Caco-2 (cell line): ENCODE measurements at regions of chr3 and their contacts with region 1.

Region 1: GRCh38 chr3:34012102-34012461 is 213.7 kb downstream of the PDCD6IP start:
- DNase-seq: peak; percentile 78 to 82
- H3K4me3 ChIP-seq: no peak overlapping the region
- H3K4me3 Mint-ChIP-seq: no peak overlapping the region
- H3K27ac Mint-ChIP-seq: peak overlapping the region; percentile 67
- H3K4me1 ChIP-seq: peaks cover 49% of the 10 kb centered on the region
- H3K4me1 Mint-ChIP-seq: peaks cover 35% of the 10 kb centered on the region
- H3K27me3 ChIP-seq: no peaks in the 10 kb centered on the region
- H3K27me3 Mint-ChIP-seq: no peaks in the 10 kb centered on the region
- CTCF ChIP-seq: no peak

Region 2: DNA sequence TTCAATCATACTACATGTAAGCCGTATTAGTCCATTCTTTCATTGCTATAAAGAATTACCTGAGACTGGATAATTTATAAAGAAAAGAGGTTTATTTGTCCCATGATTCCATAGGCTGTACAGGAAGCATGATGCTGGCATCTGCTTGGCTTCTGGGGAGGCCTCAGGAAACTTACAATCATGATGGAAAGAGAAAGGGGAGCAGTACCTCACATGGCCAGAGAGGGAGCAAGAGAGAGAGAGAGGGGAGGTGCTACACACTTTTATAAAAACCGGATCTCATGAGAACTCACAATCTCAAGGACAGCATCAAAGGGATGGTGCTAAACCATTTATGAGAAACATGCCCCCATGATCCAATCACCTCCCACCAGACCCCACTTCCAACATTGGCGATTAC is 279.7 kb before region 1 on chr3:
- CTCF ChIA-PET with region 1: no interaction called
- POLR2A ChIA-PET with region 1: no interaction called
- intact Hi-C with region 1: no loop called
- DNase-seq: peak in 1 of 2 experiments; percentile 16
- H3K4me3 ChIP-seq: no peak overlapping the region
- H3K4me3 Mint-ChIP-seq: no peak overlapping the region
- H3K27ac Mint-ChIP-seq: no peak overlapping the region
- H3K4me1 ChIP-seq: no peaks in the 10 kb centered on the region
- H3K4me1 Mint-ChIP-seq: no peaks in the 10 kb centered on the region
- H3K27me3 ChIP-seq: no peaks in the 10 kb centered on the region
- H3K27me3 Mint-ChIP-seq: no peaks in the 10 kb centered on the region
- CTCF ChIP-seq: peak in 1 of 2 experiments; percentile 22

Region 3: GRCh38 chr3:33954956-33955355 is 57.1 kb before region 1 on chr3:
- CTCF ChIA-PET with region 1: no interaction called
- POLR2A ChIA-PET with region 1: no interaction called
- intact Hi-C with region 1: loop called (anchors 1 kb)
- DNase-seq: peak; percentile 38 to 39
- H3K4me3 ChIP-seq: no peak overlapping the region
- H3K4me3 Mint-ChIP-seq: no peak overlapping the region
- H3K27ac Mint-ChIP-seq: no peak overlapping the region
- H3K4me1 ChIP-seq: no peaks in the 10 kb centered on the region
- H3K4me1 Mint-ChIP-seq: no peaks in the 10 kb centered on the region
- H3K27me3 ChIP-seq: no peaks in the 10 kb centered on the region
- H3K27me3 Mint-ChIP-seq: peaks cover 11% of the 10 kb centered on the region
- CTCF ChIP-seq: peak; percentile 42 to 44

Region 4: DNA sequence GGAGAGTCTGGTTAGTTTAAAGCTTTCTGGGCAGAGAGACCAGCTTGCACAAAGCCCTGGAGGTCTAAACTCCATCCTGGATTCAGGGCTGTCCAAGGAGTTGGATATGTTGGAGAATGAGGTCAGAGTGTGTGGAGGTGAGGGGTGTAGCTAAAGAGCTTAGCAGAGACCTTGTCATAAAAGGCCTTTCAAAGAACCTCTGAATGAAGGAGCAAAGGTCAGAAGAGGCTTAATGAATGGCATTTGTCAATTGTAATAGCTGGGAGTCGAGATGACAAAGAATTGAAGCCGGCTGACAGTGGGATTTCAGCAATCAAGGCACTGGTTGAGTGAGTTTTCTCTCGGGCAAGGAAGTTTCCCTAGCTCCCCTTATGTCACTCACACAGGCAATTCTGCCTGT is 11.1 kb before region 1 on chr3:
- CTCF ChIA-PET with region 1: interaction called, 8 read pairs
- POLR2A ChIA-PET with region 1: interaction called, 5 read pairs
- intact Hi-C with region 1: loop called (anchors 1 kb)
- DNase-seq: peak; percentile 55 to 69
- H3K4me3 ChIP-seq: no peak overlapping the region
- H3K4me3 Mint-ChIP-seq: no peak overlapping the region
- H3K27ac Mint-ChIP-seq: peak overlapping the region; percentile 20
- H3K4me1 ChIP-seq: peaks cover 24% of the 10 kb centered on the region
- H3K4me1 Mint-ChIP-seq: peaks cover 23% of the 10 kb centered on the region
- H3K27me3 ChIP-seq: no peaks in the 10 kb centered on the region
- H3K27me3 Mint-ChIP-seq: no peaks in the 10 kb centered on the region
- CTCF ChIP-seq: no peak

Region 5: DNA sequence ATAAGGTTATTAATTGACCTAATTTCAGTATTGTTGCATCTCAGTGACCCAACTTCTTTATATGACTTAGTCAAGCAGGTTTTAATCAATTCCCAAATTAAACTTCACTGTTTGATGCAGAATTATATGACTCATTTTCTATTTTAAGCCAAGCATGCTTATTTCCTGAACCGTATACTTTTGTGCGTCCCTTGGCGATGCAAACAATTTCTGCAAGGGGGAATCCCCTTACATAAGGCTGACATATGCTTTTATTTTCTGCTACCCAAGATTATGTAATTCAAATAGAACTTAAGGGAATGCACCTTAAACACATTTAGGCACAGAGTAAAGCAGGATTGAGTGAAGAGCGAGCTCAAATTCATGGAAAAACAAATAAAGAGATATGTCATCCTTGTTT is 90.2 kb after region 1 on chr3:
- CTCF ChIA-PET with region 1: no interaction called
- POLR2A ChIA-PET with region 1: no interaction called
- intact Hi-C with region 1: no loop called
- DNase-seq: no peak
- H3K4me3 ChIP-seq: no peak overlapping the region
- H3K4me3 Mint-ChIP-seq: no peak overlapping the region
- H3K27ac Mint-ChIP-seq: no peak overlapping the region
- H3K4me1 ChIP-seq: no peaks in the 10 kb centered on the region
- H3K4me1 Mint-ChIP-seq: no peaks in the 10 kb centered on the region
- H3K27me3 ChIP-seq: no peaks in the 10 kb centered on the region; the same call in 1 of the 2 replicates
- H3K27me3 Mint-ChIP-seq: peaks cover 11% of the 10 kb centered on the region
- CTCF ChIP-seq: no peak